GM23248 (cell line): ENCODE measurements at regions of chr1 and their contacts with region 1.

Region 1: GRCh38 chr1:107750358-107750959 is 214.5 kb downstream of the VAV3 start:
- DNase-seq: peak; percentile 89
- H3K4me3 ChIP-seq: no peak overlapping the region
- H3K27ac ChIP-seq: no peak overlapping the region
- H3K4me1 ChIP-seq: no peaks in the 10 kb centered on the region
- H3K27me3 ChIP-seq: no peaks in the 10 kb centered on the region

Region 2: DNA sequence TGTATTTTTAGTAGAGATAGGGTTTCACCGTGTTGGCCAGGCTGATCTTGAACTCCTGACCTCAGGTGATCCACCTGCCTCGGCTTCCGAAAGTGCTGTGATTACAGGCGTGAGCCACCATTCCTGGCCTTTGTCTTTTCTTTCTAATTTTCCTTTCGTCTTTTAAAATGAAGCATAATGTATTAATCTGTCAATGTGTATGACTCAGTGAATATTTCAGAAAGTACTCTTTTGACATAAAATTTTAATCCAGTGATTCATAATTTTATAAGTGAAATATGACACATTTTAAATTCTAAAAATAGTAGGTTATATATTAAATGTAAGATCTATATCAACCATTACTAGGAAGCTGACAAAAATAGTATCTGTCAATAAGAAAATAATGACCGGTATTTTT is 1752.9 kb before region 1 on chr1:
- in situ Hi-C with region 1: loop called (anchors 25 kb)
- DNase-seq: no peak
- H3K4me3 ChIP-seq: no peak overlapping the region
- H3K27ac ChIP-seq: no peak overlapping the region
- H3K4me1 ChIP-seq: no peaks in the 10 kb centered on the region
- H3K27me3 ChIP-seq: no peaks in the 10 kb centered on the region

Region 3: DNA sequence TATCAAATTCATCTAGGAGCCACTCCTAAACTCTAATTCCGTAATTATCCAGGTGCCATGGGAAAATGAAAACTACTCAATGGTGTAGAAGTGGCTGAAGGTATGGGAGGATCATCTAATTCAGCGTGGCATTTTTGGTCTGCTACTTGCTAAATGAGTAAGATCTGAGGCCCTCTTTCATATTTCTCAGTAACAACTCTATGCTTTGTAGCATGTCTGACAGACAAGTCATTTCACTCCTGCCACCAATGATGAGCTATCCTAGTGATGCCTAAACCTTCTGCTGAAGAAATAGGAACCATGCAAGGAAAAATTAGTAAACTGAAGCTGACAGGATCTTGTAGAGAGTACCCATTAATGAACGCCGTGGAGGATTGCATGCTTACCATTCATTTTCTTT is 464.3 kb before region 1 on chr1:
- in situ Hi-C with region 1: loop called (anchors 10 kb)
- DNase-seq: no peak
- H3K4me3 ChIP-seq: no peak overlapping the region
- H3K27ac ChIP-seq: no peak overlapping the region
- H3K4me1 ChIP-seq: no peaks in the 10 kb centered on the region
- H3K27me3 ChIP-seq: no peaks in the 10 kb centered on the region

Region 4: DNA sequence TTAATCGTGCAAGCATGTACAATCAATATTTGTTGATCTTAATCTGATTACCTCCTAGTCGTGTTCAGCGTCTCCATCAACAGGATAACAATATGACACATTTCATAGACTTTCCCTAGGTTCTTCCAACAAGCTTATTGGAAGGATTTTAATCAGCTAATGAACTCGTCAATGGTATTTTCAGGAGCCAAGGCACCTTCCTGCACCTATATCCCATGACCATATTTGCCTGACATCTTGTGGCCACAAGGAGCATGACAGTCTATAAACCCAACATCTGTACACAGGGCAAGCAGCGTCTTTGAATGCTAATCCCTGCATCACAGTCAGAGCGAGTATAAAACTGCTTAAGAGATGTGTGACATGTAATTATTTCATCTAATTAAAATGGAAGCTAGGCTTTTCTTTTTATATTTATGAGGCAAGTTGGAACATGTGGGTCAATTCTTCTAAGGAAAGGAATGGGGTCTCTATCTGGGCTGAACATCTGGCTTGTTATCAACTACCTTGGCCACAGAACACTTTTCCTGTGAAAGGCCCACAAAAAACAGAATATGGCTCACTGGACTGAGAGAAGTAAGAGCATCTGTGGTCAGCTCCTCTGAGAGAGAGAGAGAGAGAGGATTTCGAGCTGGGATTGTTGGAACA is 220.8 kb before region 1 on chr1:
- in situ Hi-C with region 1: loop called (anchors 25 kb)
- DNase-seq: peak; percentile 78
- H3K4me3 ChIP-seq: no peak overlapping the region
- H3K27ac ChIP-seq: peak overlapping the region; percentile 67
- H3K4me1 ChIP-seq: peaks cover 32% of the 10 kb centered on the region
- H3K27me3 ChIP-seq: no peaks in the 10 kb centered on the region

Region 5: DNA sequence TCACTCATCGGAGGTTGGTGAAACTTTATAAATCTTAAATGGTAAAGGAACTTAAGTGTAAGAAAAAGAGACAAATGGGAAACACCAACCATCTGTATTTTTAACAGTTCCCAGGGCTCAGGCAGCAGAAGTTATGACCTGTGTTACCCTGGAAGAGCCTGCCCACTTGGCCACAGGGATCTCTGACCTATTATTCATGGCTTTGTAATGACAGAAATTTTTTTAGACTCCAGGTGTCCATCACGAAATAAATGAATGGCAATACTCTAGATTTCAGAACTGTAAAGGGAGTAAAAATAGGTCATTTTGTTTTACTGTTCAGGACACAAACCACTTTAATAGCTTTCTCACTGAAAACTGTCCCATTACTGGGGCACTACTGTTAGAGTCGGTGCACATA is 175.2 kb before region 1 on chr1:
- in situ Hi-C with region 1: no loop called
- DNase-seq: no peak
- H3K4me3 ChIP-seq: no peak overlapping the region
- H3K27ac ChIP-seq: no peak overlapping the region
- H3K4me1 ChIP-seq: peaks cover 9% of the 10 kb centered on the region
- H3K27me3 ChIP-seq: no peaks in the 10 kb centered on the region